Gastrocnemius medialis (tissue), 4 donors: ENCODE measurements at regions of chr12 and their contacts with region 1.

Region 1: GRCh38 chr12:52278541-52279421 is 4.3 kb downstream of the KRT86 start:
- DNase-seq: peak; percentile 36 to 57
- ATAC-seq: peak; percentile 78 to 85
- H3K4me3 ChIP-seq: peak overlapping the region in 2 of 4 donors; percentile 15 to 33
- H3K27ac ChIP-seq: no peak overlapping the region
- H3K4me1 ChIP-seq: peaks cover 19 to 20% of the 10 kb centered on the region in 2 donors
- H3K27me3 ChIP-seq: no peaks in the 10 kb centered on the region
- CTCF ChIP-seq: peak; percentile 58 to 99 (median 93)
- POLR2A ChIP-seq: no peak

Region 2: GRCh38 chr12:51531978-51532497 is 746.7 kb before region 1 on chr12:
- in situ Hi-C with region 1: no loop called
- intact Hi-C with region 1: no loop called
- DNase-seq: peak; percentile 15 to 44
- ATAC-seq: peak; percentile 82 to 83
- H3K4me3 ChIP-seq: no peak overlapping the region
- H3K27ac ChIP-seq: no peak overlapping the region
- H3K4me1 ChIP-seq: no peaks in the 10 kb centered on the region
- H3K27me3 ChIP-seq: peaks cover 0 to 8% (median 3%) of the 10 kb centered on the region in 3 donors
- CTCF ChIP-seq: peak; percentile 48 to 85 (median 66)
- POLR2A ChIP-seq: no peak

Region 3: GRCh38 chr12:52147367-52147972 is 131.3 kb before region 1 on chr12:
- in situ Hi-C with region 1: no loop called
- intact Hi-C with region 1: loop called (anchors 5 kb)
- DNase-seq: peak; percentile 91 to 97
- ATAC-seq: peak; percentile 72 to 73
- H3K4me3 ChIP-seq: no peak overlapping the region
- H3K27ac ChIP-seq: peak overlapping the region; percentile 60 to 90 (median 82)
- H3K4me1 ChIP-seq: peaks cover 20 to 26% of the 10 kb centered on the region in 2 donors
- H3K27me3 ChIP-seq: no peaks in the 10 kb centered on the region
- CTCF ChIP-seq: no peak
- POLR2A ChIP-seq: peak; percentile 31 to 39

Region 4: GRCh38 chr12:52156736-52157565 is 121.8 kb before region 1 on chr12:
- in situ Hi-C with region 1: loop called in 1 of 4 experiments (anchors 5 kb)
- intact Hi-C with region 1: no loop called
- DNase-seq: peak; percentile 55 to 67
- ATAC-seq: peak; percentile 69 to 74
- H3K4me3 ChIP-seq: no peak overlapping the region
- H3K27ac ChIP-seq: no peak overlapping the region
- H3K4me1 ChIP-seq: peaks cover 0 to 3% of the 10 kb centered on the region in 2 donors
- H3K27me3 ChIP-seq: no peaks in the 10 kb centered on the region
- CTCF ChIP-seq: peak; percentile 90 to 95 (median 93)
- POLR2A ChIP-seq: no peak

Region 5: GRCh38 chr12:52221912-52222457 is 56.8 kb before region 1 on chr12:
- in situ Hi-C with region 1: no loop called
- intact Hi-C with region 1: loop called (anchors 2 kb)
- DNase-seq: peak in 1 of 2 donors; percentile 68
- ATAC-seq: peak; percentile 29 to 84
- H3K4me3 ChIP-seq: no peak overlapping the region
- H3K27ac ChIP-seq: no peak overlapping the region
- H3K4me1 ChIP-seq: peaks cover 0 to 5% of the 10 kb centered on the region in 2 donors
- H3K27me3 ChIP-seq: no peaks in the 10 kb centered on the region
- CTCF ChIP-seq: peak; percentile 23 to 67 (median 46)
- POLR2A ChIP-seq: no peak

Region 6: GRCh38 chr12:52249051-52249461 is 29.7 kb before region 1 on chr12:
- in situ Hi-C with region 1: no loop called
- intact Hi-C with region 1: loop called (anchors 1 kb)
- DNase-seq: peak; percentile 43 to 69
- ATAC-seq: peak; percentile 9 to 29
- H3K4me3 ChIP-seq: no peak overlapping the region
- H3K27ac ChIP-seq: peak overlapping the region; percentile 60 to 80 (median 76)
- H3K4me1 ChIP-seq: peaks cover 42 to 51% of the 10 kb centered on the region in 2 donors
- H3K27me3 ChIP-seq: no peaks in the 10 kb centered on the region
- CTCF ChIP-seq: no peak
- POLR2A ChIP-seq: no peak

Region 7: DNA sequence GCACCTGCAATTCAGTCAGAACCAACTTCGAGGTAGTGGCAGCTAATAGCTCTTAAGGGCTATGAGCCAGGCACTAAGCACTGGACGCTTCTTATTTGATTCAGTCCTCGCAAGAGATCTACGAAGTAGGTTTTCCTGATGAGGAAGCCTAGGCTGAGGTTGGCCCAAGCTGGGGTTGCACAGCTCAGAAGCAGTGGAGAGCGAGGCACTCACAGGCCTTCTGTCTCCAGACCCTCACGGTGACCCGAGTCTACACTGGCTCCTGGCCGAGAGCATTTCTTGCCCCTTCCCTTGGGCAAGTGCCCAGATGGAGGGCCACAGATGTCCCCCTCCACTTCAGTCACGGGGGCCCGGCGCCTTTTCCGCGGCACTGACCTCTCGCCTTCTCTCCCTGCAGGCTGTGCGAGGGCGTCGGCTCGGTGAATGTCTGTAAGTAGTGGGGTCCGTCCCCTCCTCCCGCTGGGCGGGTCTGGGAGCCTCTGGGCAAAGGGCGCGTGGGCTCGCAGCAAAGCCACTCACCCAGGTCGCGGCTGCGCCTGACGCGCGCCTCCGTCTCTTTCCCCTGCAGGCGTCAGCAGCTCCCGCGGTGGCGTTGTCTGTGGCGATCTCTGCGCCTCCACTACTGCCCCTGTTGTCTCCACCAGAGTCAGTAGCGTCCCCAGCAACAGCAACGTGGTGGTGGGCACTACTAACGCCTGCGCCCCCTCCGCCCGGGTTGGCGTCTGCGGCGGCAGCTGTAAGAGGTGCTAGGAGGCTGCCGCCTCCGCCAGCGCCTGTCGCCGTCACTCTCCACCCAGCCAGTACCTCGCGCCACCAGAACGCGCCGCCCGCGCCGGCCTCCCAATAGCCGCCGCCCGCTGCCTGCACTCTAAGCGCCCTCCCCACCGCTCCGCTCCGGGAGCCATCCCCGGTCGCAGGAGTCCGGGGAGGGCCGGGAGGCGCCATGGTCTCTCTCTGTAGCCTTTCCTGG is 29.3 kb after region 1 on chr12:
- in situ Hi-C with region 1: no loop called
- intact Hi-C with region 1: loop called (anchors 2 kb)
- DNase-seq: peak; percentile 19 to 76
- ATAC-seq: peak; percentile 89 to 94
- H3K4me3 ChIP-seq: peak overlapping the region; percentile 51 to 78 (median 54)
- H3K27ac ChIP-seq: peak overlapping the region in 2 of 4 donors; percentile 35 to 77
- H3K4me1 ChIP-seq: peaks cover 5 to 8% of the 10 kb centered on the region in 2 donors
- H3K27me3 ChIP-seq: no peaks in the 10 kb centered on the region
- CTCF ChIP-seq: peak in 4 of 5 experiments; percentile 24 to 51 (median 33)
- POLR2A ChIP-seq: peak in 1 of 2 donors; percentile 33

Region 8: DNA sequence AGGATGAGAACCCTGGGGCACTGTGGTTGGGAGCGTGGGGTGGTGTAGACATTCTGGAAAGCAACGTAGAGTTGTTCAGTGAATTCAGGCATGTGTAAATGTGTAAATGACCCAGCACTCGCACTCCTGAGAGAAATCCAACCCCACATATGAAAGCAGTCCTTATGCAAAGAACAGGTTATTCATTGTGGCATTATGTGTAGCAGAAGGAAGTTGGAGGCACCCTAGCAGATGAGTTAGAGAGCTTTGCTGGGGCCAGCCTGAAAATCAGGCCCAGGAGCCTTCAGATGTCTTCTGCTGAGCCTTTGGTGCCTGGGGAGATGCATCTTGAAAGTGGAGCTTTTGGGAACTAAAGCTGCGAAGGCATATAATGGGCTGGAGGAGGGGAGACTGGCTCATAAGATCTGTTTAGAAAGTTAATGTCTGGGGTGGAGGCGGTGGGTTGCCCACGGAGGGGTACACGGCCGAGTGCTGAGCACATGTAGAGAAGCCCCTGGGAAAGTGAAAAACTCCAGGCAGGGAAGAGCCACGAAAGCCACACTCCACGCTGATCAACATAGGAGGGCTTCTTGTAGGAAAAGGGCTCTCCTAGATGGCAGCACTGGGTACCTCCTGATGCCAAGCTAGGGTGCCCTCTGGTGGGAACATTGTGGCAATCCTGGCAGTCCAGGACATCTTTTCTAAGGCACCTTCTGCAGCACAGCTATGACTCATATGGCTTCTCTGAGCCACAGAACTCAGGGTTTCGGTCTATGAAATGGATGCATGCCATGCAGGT is 48.5 kb after region 1 on chr12:
- in situ Hi-C with region 1: no loop called
- intact Hi-C with region 1: loop called (anchors 1 kb)
- DNase-seq: peak; percentile 68 to 82
- ATAC-seq: peak; percentile 98 to 99
- H3K4me3 ChIP-seq: no peak overlapping the region
- H3K27ac ChIP-seq: no peak overlapping the region
- H3K4me1 ChIP-seq: no peaks in the 10 kb centered on the region
- H3K27me3 ChIP-seq: peaks cover 0 to 2% (median 2%) of the 10 kb centered on the region in 3 donors
- CTCF ChIP-seq: peak; percentile 64 to 81 (median 66)
- POLR2A ChIP-seq: no peak